Heart left ventricle (tissue), 16 donors: ENCODE measurements at regions of chr19 and their contacts with region 1.

Region 1: GRCh38 chr19:18401580-18402112 is 4.2 kb upstream of the LRRC25 start:
- DNase-seq: peak in 3 of 5 donors; percentile 65 to 84 (median 72)
- ATAC-seq: peak; percentile 81 to 90 (median 82)
- H3K4me3 ChIP-seq: no peak overlapping the region
- H3K27ac ChIP-seq: peak overlapping the region in 1 of 12 donors; percentile 74
- H3K4me1 ChIP-seq: peaks cover 0 to 53% (median 0%) of the 10 kb centered on the region in 12 donors
- H3K27me3 ChIP-seq: peaks cover 0 to 18% (median 0%) of the 10 kb centered on the region in 9 donors
- CTCF ChIP-seq: peak in 9 of 12 donors; percentile 11 to 41 (median 23)
- POLR2A ChIP-seq: no peak

Region 2: GRCh38 chr19:16495982-16496612 is 1905.5 kb before region 1 on chr19 and contains the starts of genes C19orf44 and CALR3:
- intact Hi-C with region 1: no loop called
- DNase-seq: peak; percentile 99 to 100 (median 99)
- ATAC-seq: peak; percentile 98 to 99 (median 99)
- H3K4me3 ChIP-seq: peak within 1 kb of the TSS; percentile 53 to 85 (median 72)
- H3K27ac ChIP-seq: peak within 1 kb of the TSS in 11 of 12 donors; percentile 54 to 83 (median 81)
- H3K4me1 ChIP-seq: peaks cover 0 to 18% (median 5%) of the 10 kb centered on the region in 12 donors
- H3K27me3 ChIP-seq: no peaks in the 10 kb centered on the region
- CTCF ChIP-seq: peak in 6 of 12 donors; percentile 14 to 52 (median 40)
- POLR2A ChIP-seq: peak in 1 of 2 donors; percentile 59
- total RNA-seq, gene C19orf44: 1.6 to 4.8 (median 3.3) TPM
- total RNA-seq, gene CALR3: not detected

Region 3: GRCh38 chr19:18259893-18260292 is 141.8 kb before region 1 on chr19:
- intact Hi-C with region 1: loop called in 2 of 10 experiments (anchors 5 to 10 kb)
- DNase-seq: no peak
- ATAC-seq: no peak
- H3K4me3 ChIP-seq: no peak overlapping the region
- H3K27ac ChIP-seq: no peak overlapping the region
- H3K4me1 ChIP-seq: no peaks in the 10 kb centered on the region
- H3K27me3 ChIP-seq: peaks cover 0 to 10% (median 0%) of the 10 kb centered on the region in 9 donors
- CTCF ChIP-seq: no peak
- POLR2A ChIP-seq: no peak

Region 4: DNA sequence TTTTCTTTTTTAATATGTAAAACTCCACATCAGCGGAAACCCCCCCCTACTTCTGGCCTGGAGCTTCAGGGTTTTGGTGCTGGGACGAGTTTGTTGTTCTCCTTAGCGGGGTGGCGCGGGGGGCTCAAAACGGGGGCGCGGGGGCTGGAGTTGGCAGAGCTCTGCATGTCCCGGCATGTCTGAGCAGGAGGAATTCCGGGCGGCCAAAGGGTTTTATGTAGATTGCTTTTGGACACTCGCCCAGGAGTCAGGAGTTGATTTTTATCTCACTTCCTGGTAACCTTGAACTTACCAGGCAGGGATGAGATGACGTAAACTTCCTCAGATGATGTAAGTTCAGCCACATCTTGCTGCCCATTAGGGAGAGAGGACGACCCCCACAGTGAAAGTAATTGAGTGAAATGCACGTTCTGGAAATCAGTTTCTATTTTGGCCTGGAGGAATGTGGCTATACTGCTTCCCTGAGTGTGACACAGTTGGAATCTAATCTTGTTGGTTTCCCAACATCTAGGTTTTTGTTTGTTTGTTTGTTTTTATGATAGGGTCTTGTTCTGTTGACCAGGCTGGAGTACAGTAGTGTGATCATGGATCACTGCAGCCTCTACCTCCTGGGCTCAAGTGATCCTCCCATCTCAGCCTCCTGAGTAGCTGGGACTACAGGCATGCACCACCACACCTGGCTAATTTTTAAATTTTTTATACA is 36.7 kb before region 1 on chr19:
- intact Hi-C with region 1: no loop called
- DNase-seq: peak in 4 of 5 donors; percentile 70 to 85 (median 82)
- ATAC-seq: peak; percentile 53 to 92 (median 72)
- H3K4me3 ChIP-seq: peak overlapping the region in 3 of 12 donors; percentile 2 to 28 (median 19)
- H3K27ac ChIP-seq: peak overlapping the region; percentile 43 to 90 (median 78)
- H3K4me1 ChIP-seq: peaks cover 0 to 33% (median 17%) of the 10 kb centered on the region in 12 donors
- H3K27me3 ChIP-seq: no peaks in the 10 kb centered on the region
- CTCF ChIP-seq: no peak
- POLR2A ChIP-seq: no peak